ENCODE measurements at regions of chr2 and their contacts with region 1.

Region 1: GRCh38 chr2:191051825-191052778 is 38.1 kb upstream of the STAT1 start:
- DNase-seq: peak; percentile 56
- ATAC-seq: peak; percentile 72
- H3K4me3 ChIP-seq: no peak overlapping the region
- H3K27ac ChIP-seq: no peak overlapping the region
- H3K4me1 ChIP-seq: peaks cover 17% of the 10 kb centered on the region
- H3K27me3 ChIP-seq: peaks cover 0 to 1% of the 10 kb centered on the region in 2 experiments; a peak in 2 of 5 replicates
- CTCF ChIP-seq: peak; percentile 64
- EP300 ChIP-seq: no peak
- POLR2A ChIP-seq: no peak
- RAD21 ChIP-seq: no peak

Region 2: DNA sequence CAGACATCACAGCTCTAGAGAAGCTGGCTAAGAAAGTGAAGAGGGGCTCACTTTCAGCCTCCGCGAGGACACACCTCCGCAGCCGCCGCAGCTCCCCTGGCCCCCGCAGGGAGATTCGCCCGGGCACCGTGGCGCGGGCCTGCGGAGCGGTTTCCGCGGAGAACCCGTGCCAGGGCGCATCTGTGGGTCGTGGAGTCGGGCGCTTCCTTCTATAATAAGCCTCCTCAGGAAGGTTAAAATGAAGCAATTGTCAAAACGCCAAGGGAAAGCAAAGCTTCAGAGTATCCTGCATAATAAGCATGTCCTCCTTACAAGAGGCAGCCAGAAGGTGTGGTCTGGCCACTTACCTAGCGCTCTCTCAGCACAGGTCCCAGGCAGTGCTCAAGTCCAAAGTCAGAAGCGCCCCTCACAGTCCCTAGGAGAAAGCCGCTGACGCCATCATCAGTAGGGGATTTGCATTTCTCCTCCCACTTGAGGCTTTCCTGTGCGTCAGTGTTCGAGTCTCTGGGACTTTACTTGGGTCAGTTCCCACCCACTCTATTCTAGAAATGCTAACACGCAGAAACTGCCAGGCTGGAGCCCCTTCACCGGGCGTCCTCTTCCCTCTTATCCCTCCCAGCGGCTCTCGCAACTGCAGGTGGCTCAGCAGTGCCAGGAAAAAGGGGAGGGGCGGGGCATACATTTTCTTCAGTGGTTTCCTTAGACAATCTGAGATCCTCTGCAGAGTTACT is 98.7 kb after region 1 on chr2 and contains the start of gene STAT4:
- CTCF ChIA-PET with region 1: interaction called, 19 read pairs
- POLR2A ChIA-PET with region 1: no interaction called
- in situ Hi-C with region 1: loop called (anchors 5 kb)
- intact Hi-C with region 1: loop called (anchors 1 kb)
- DNase-seq: no peak
- ATAC-seq: peak; percentile 81
- H3K4me3 ChIP-seq: peak within 1 kb of the TSS; percentile 11 to 64 (median 56); a peak in 5 of 6 replicates
- H3K27ac ChIP-seq: no peak within 1 kb of the TSS
- H3K4me1 ChIP-seq: peaks cover 10% of the 10 kb centered on the region
- H3K27me3 ChIP-seq: peaks cover 0 to 37% of the 10 kb centered on the region in 2 experiments; a peak in 4 of 5 replicates
- CTCF ChIP-seq: no peak
- EP300 ChIP-seq: no peak
- POLR2A ChIP-seq: no peak
- RAD21 ChIP-seq: no peak
- total RNA-seq, gene STAT4: not detected in 2 replicates

Measured in HepG2 (cell line).